ENCODE measurements at regions of chr13 and their contacts with region 1.

Region 1: DNA sequence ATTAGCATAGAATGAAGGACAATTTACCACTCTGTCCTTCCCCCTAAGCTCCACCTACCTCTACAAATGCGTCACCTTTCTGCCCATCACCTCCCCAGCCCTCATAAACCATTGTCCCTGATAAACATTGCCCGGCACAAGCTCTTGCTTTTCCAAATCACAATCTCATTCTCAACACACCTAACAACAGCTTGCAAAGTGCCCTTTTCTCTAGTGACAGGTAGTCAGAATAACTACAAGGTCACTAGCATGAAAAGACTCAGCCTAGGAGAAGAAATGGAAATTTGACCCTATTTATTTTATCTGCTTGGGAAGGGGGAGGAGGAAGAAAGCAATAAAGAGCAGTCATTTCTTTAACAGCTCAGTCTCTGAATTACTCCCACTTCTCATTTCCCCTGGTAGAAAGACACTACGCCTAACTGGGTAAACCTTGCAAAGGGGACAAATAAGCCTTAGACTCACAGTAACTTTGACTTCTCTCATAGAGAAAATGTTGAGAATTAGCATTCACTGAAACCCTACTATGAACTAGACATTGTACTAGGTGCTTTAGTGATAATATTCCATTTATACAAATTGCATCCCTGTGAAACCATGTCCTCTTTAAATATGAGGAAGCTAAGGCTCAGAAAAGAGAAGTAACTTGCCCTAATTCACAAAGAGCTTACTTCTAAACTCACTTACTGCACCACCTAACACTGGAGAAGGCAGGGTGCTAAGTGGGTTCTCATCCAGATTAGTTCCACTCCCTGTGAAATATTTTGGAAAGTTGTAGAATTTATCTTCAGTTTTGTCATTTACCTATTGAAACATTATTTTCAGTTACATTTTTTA is 116.2 kb upstream of the FNDC3A start:
- H3K4me3 Mint-ChIP-seq: peak overlapping the region; percentile 19
- H3K27ac Mint-ChIP-seq: peak overlapping the region; percentile 79
- H3K4me1 Mint-ChIP-seq: peaks cover 26% of the 10 kb centered on the region
- H3K27me3 Mint-ChIP-seq: no peaks in the 10 kb centered on the region

Region 2: DNA sequence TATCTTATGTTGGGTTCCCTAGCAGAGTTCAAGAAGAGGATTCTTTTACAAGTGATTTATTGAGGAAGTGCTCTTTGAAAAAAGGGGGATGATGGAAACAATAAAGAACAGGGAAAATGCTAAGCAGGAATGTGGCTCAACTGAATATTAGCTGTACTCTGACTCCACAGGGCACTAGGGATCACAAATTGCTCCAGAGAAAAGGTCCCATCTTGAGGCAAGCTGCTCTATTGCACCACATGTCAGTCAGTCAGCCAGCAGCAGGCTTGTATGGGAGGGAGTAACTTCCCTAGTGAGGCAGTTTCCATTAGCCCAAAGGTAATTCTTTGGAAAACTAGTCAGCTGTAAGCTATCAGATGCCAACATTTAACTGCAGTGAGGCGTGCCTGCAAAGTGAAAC is 42.9 kb after region 1 on chr13:
- intact Hi-C with region 1: loop called (anchors 5 kb)
- H3K4me3 Mint-ChIP-seq: no peak overlapping the region
- H3K27ac Mint-ChIP-seq: no peak overlapping the region
- H3K4me1 Mint-ChIP-seq: peaks cover 23% of the 10 kb centered on the region
- H3K27me3 Mint-ChIP-seq: no peaks in the 10 kb centered on the region